ENCODE measurements at regions of chr6 and their contacts with region 1.

Region 1: GRCh38 chr6:39189915-39190544 is 39.2 kb downstream of the KCNK5 start:
- H3K4me3 ChIP-seq: no peak overlapping the region
- H3K27ac ChIP-seq: no peak overlapping the region
- H3K4me1 ChIP-seq: no peaks in the 10 kb centered on the region
- CTCF ChIP-seq: peak; percentile 73

Region 2: DNA sequence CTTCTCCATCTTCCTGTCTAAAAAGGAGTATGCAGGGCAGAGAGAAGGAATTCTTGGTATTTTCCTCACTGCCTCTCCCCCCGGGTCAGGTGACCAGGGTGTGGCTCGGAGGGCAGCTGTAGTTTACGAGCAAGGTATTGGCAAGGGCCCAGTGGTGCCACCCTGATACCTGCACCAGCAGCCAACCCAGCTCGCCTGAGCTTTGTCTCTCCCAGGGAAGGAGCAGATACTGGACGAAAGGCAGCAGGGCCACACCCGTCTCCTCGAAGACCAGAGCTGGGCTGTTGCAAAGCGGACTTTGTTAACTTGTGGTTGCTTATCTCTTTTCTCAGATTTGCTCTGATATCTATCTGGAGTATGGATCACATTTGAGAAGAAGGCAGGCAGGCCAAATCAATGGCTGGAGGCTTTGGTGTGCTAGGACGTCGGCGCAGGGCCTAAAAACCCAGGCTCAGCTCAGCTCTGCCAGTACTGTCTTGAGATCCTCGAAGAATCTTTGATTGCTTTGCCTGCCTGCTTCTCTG is 13.9 kb after region 1 on chr6:
- CTCF ChIA-PET with region 1: interaction called, 17 read pairs
- POLR2A ChIA-PET with region 1: interaction called, 7 read pairs
- H3K4me3 ChIP-seq: no peak overlapping the region
- H3K27ac ChIP-seq: no peak overlapping the region
- H3K4me1 ChIP-seq: peaks cover 5% of the 10 kb centered on the region
- CTCF ChIP-seq: no peak

Region 3: GRCh38 chr6:39218873-39219536 is 29.0 kb after region 1 on chr6:
- CTCF ChIA-PET with region 1: interaction called, 11 read pairs
- POLR2A ChIA-PET with region 1: no interaction called
- H3K4me3 ChIP-seq: no peak overlapping the region
- H3K27ac ChIP-seq: no peak overlapping the region
- H3K4me1 ChIP-seq: peaks cover 16% of the 10 kb centered on the region
- CTCF ChIP-seq: no peak

Measured in HEK293 (cell line).